ENCODE measurements at regions of chr3 and their contacts with region 1.

Region 1: GRCh38 chr3:171412054-171412453 is 48.2 kb downstream of the TNIK start:
- DNase-seq: no peak
- ATAC-seq: no peak
- H3K4me3 ChIP-seq: no peak overlapping the region
- H3K4me3 Mint-ChIP-seq: no peak overlapping the region
- H3K27ac ChIP-seq: no peak overlapping the region
- H3K27ac Mint-ChIP-seq: no peak overlapping the region
- H3K4me1 ChIP-seq: peaks cover 8 to 16% of the 10 kb centered on the region in 2 experiments
- H3K4me1 Mint-ChIP-seq: peaks cover 83 to 87% (median 84%) of the 10 kb centered on the region in 3 donors
- H3K27me3 ChIP-seq: no peaks in the 10 kb centered on the region
- H3K27me3 Mint-ChIP-seq: no peaks in the 10 kb centered on the region

Region 2: DNA sequence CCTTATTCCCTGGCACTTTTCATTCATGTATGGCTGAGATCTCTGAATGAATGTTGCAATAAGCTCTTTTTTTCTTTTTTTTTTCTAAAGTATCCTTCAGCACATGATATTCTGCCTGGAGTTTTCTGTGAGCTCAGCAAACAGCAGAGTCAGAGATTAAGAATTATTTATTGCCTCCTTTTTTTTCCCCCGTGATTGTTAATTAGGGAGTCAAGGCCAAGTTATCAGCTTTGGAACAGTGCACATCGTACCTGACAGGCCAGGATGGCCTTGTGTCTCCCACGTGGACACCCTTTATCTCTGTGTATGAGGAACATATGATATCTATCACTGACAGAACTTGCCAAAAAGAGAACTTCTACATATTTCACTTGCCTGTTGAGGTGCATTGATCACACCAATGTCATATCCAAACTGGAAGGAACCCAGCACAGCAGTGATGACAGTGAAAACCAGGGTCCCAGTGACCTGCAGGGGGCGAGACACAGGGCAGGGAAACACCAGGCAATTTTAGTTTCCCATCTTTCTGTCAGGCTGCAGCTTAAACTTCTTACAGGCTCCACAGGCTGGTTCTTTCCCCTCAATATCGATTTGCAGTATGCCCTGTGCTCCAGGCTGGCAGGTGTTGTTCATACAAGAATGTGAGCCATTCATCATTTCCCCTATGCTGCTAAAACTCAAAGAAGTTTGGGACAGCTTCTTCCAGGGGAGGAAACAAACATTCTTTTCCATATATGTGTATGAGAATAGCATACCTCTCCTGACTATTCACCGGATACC is 393.7 kb before region 1 on chr3:
- CTCF ChIA-PET with region 1: no interaction called
- POLR2A ChIA-PET with region 1: no interaction called
- DNase-seq: no peak
- ATAC-seq: no peak
- H3K4me3 ChIP-seq: no peak overlapping the region
- H3K4me3 Mint-ChIP-seq: no peak overlapping the region
- H3K27ac ChIP-seq: no peak overlapping the region
- H3K27ac Mint-ChIP-seq: no peak overlapping the region
- H3K4me1 ChIP-seq: no peaks in the 10 kb centered on the region
- H3K4me1 Mint-ChIP-seq: no peaks in the 10 kb centered on the region
- H3K27me3 ChIP-seq: no peaks in the 10 kb centered on the region
- H3K27me3 Mint-ChIP-seq: peaks cover 5 to 17% of the 10 kb centered on the region in 2 donors

Region 3: GRCh38 chr3:171293142-171293782 is 118.8 kb before region 1 on chr3:
- CTCF ChIA-PET with region 1: no interaction called
- POLR2A ChIA-PET with region 1: no interaction called
- DNase-seq: no peak
- ATAC-seq: peak in 1 of 4 experiments; percentile 42
- H3K4me3 ChIP-seq: no peak overlapping the region
- H3K4me3 Mint-ChIP-seq: peak overlapping the region in 1 of 3 donors; percentile 21
- H3K27ac ChIP-seq: no peak overlapping the region
- H3K27ac Mint-ChIP-seq: peak overlapping the region; percentile 75 to 78
- H3K4me1 ChIP-seq: peaks cover 4 to 12% of the 10 kb centered on the region in 2 experiments
- H3K4me1 Mint-ChIP-seq: peaks cover 61 to 66% (median 66%) of the 10 kb centered on the region in 3 donors
- H3K27me3 ChIP-seq: no peaks in the 10 kb centered on the region
- H3K27me3 Mint-ChIP-seq: no peaks in the 10 kb centered on the region

Region 4: GRCh38 chr3:171491361-171491760 is 79.3 kb after region 1 on chr3:
- CTCF ChIA-PET with region 1: no interaction called
- POLR2A ChIA-PET with region 1: interaction called in 1 of 2 experiments, 21 read pairs
- DNase-seq: peak in 1 of 35 experiments; percentile 46
- ATAC-seq: peak in 2 of 4 experiments; percentile 24 to 25
- H3K4me3 ChIP-seq: peak overlapping the region in 1 of 2 donors; percentile 16
- H3K4me3 Mint-ChIP-seq: peak overlapping the region; percentile 25 to 76 (median 66)
- H3K27ac ChIP-seq: peak overlapping the region; percentile 47
- H3K27ac Mint-ChIP-seq: peak overlapping the region; percentile 70 to 83
- H3K4me1 ChIP-seq: peaks cover 25 to 29% of the 10 kb centered on the region in 2 experiments
- H3K4me1 Mint-ChIP-seq: peaks cover 38 to 52% (median 48%) of the 10 kb centered on the region in 3 donors
- H3K27me3 ChIP-seq: no peaks in the 10 kb centered on the region
- H3K27me3 Mint-ChIP-seq: no peaks in the 10 kb centered on the region